AG04449 (cell line): ENCODE measurements at regions of chr10 and their contacts with region 1.

Region 1: GRCh38 chr10:110893559-110894179 is 21.9 kb downstream of the PDCD4 start:
- DNase-seq: no peak
- H3K4me3 ChIP-seq: no peak overlapping the region
- CTCF ChIP-seq: peak; percentile 23

Region 2: GRCh38 chr10:110758898-110759297 is 134.8 kb before region 1 on chr10:
- CTCF ChIA-PET with region 1: interaction called, 12 read pairs
- POLR2A ChIA-PET with region 1: no interaction called
- DNase-seq: peak; percentile 9
- H3K4me3 ChIP-seq: no peak overlapping the region
- CTCF ChIP-seq: no peak

Region 3: DNA sequence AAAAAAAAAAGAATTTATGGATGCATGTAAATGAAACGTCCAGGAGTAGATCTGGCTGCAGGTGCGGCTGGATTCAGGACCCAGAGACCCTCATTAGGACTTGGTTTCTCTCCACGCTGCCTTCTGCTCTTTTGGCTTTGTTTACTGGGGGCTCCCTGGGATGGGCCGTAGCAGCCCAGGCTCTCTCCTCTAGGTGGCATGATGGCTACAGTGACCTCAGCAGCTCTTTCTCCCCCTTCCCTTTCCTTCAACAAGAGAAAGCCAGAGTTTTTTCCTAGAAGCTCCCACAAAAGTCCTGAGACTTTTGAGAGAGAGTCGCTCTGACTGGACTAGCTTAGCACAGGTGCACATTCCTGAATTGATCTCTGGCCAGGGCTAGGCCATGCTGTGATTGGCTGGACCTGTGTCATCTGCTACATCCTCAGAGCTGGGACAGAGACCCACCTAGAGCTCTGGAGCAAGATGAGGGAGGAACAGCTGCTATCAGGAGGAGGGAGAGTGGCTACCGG is 89.8 kb before region 1 on chr10:
- CTCF ChIA-PET with region 1: interaction called, 11 read pairs
- POLR2A ChIA-PET with region 1: no interaction called
- DNase-seq: no peak
- H3K4me3 ChIP-seq: no peak overlapping the region
- CTCF ChIP-seq: peak; percentile 74

Region 4: GRCh38 chr10:110912374-110912773 is 18.7 kb after region 1 on chr10:
- CTCF ChIA-PET with region 1: interaction called, 26 read pairs
- POLR2A ChIA-PET with region 1: no interaction called
- DNase-seq: peak; percentile 70
- H3K4me3 ChIP-seq: no peak overlapping the region
- CTCF ChIP-seq: no peak

Region 5: GRCh38 chr10:111116762-111117445 is 223.2 kb after region 1 on chr10:
- CTCF ChIA-PET with region 1: no interaction called
- POLR2A ChIA-PET with region 1: no interaction called
- DNase-seq: no peak
- H3K4me3 ChIP-seq: no peak overlapping the region
- CTCF ChIP-seq: no peak